ENCODE measurements at regions of chr5 and their contacts with region 1.

Region 1: GRCh38 chr5:10452768-10453331 is 11.2 kb downstream of the ROPN1L start:
- DNase-seq: peak; percentile 55 to 69
- H3K4me3 ChIP-seq: no peak overlapping the region
- H3K4me3 Mint-ChIP-seq: no peak overlapping the region
- H3K27ac Mint-ChIP-seq: no peak overlapping the region
- H3K4me1 ChIP-seq: peaks cover 11% of the 10 kb centered on the region
- H3K4me1 Mint-ChIP-seq: no peaks in the 10 kb centered on the region
- H3K27me3 ChIP-seq: no peaks in the 10 kb centered on the region
- H3K27me3 Mint-ChIP-seq: no peaks in the 10 kb centered on the region
- CTCF ChIP-seq: peak; percentile 67 to 79

Region 2: DNA sequence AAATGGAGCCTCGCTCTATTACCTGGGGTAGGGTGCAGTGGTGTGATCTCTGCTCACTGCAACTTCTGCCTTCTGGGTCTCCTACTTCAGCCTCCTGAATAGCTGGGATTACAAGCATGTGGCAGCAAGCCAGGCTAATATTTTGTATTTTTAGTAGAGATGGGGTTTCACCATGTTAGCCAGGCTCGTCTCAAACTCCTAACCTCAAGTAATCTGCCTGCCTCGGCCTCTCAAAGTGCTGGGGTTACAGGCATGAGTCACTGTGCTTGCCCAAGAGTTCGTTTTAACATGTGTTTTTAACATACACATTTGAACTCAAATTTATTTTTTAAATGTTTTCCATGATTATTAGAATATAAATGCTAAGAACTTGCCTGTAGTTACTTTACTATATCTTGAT is 65.2 kb before region 1 on chr5:
- CTCF ChIA-PET with region 1: no interaction called
- POLR2A ChIA-PET with region 1: no interaction called
- intact Hi-C with region 1: no loop called
- DNase-seq: no peak
- H3K4me3 ChIP-seq: no peak overlapping the region
- H3K4me3 Mint-ChIP-seq: no peak overlapping the region
- H3K27ac Mint-ChIP-seq: no peak overlapping the region
- H3K4me1 ChIP-seq: no peaks in the 10 kb centered on the region
- H3K4me1 Mint-ChIP-seq: no peaks in the 10 kb centered on the region
- H3K27me3 ChIP-seq: no peaks in the 10 kb centered on the region
- H3K27me3 Mint-ChIP-seq: no peaks in the 10 kb centered on the region
- CTCF ChIP-seq: no peak

Region 3: GRCh38 chr5:10563945-10564837 is 111.3 kb after region 1 on chr5 and contains the start of gene ANKRD33B:
- CTCF ChIA-PET with region 1: no interaction called
- POLR2A ChIA-PET with region 1: interaction called, 8 read pairs
- intact Hi-C with region 1: loop called (anchors 2 kb)
- DNase-seq: peak; percentile 82 to 86
- H3K4me3 ChIP-seq: peak within 1 kb of the TSS; percentile 77
- H3K4me3 Mint-ChIP-seq: peak within 1 kb of the TSS; percentile 90
- H3K27ac Mint-ChIP-seq: peak within 1 kb of the TSS; percentile 10
- H3K4me1 ChIP-seq: peaks cover 50% of the 10 kb centered on the region
- H3K4me1 Mint-ChIP-seq: peaks cover 27% of the 10 kb centered on the region
- H3K27me3 ChIP-seq: no peaks in the 10 kb centered on the region
- H3K27me3 Mint-ChIP-seq: no peaks in the 10 kb centered on the region
- CTCF ChIP-seq: no peak
- total RNA-seq, gene ANKRD33B: 22.8 and 25.3 TPM in 2 replicates

Region 4: DNA sequence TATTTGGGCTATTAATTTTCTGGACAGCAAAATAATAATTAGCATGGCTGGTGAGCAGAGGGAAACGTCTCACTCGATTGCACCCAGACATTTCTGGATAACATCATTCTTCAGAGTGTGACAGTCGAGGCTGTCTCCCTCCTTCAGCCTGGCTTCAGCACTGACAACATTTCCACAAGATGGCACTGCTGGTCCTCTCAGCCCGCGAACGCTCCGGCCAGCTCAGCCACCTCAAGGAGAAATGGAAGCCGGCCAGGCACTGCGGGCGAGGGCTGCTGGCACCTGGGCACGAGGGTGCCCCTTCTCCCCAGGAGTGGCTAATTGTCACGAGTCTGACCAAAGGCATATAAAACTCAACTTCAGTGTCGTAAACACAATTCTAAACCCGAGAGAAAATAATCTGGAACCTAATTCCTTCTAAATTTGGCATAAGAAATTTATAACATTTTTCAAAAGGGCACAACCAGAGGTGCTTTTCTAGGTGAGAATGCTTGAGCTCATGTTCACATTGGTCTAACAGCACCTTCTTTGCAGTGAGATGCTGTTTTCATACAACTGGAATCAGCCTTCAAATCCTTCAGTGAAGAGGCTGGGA is 242.3 kb after region 1 on chr5:
- CTCF ChIA-PET with region 1: interaction called, 4 read pairs
- POLR2A ChIA-PET with region 1: no interaction called
- intact Hi-C with region 1: loop called (anchors 1 kb)
- DNase-seq: peak; percentile 53 to 63
- H3K4me3 ChIP-seq: no peak overlapping the region
- H3K4me3 Mint-ChIP-seq: no peak overlapping the region
- H3K27ac Mint-ChIP-seq: no peak overlapping the region
- H3K4me1 ChIP-seq: peaks cover 16% of the 10 kb centered on the region; the same call in 1 of the 2 replicates
- H3K4me1 Mint-ChIP-seq: peaks cover 14% of the 10 kb centered on the region
- H3K27me3 ChIP-seq: no peaks in the 10 kb centered on the region
- H3K27me3 Mint-ChIP-seq: no peaks in the 10 kb centered on the region
- CTCF ChIP-seq: peak; percentile 62 to 67

Region 5: DNA sequence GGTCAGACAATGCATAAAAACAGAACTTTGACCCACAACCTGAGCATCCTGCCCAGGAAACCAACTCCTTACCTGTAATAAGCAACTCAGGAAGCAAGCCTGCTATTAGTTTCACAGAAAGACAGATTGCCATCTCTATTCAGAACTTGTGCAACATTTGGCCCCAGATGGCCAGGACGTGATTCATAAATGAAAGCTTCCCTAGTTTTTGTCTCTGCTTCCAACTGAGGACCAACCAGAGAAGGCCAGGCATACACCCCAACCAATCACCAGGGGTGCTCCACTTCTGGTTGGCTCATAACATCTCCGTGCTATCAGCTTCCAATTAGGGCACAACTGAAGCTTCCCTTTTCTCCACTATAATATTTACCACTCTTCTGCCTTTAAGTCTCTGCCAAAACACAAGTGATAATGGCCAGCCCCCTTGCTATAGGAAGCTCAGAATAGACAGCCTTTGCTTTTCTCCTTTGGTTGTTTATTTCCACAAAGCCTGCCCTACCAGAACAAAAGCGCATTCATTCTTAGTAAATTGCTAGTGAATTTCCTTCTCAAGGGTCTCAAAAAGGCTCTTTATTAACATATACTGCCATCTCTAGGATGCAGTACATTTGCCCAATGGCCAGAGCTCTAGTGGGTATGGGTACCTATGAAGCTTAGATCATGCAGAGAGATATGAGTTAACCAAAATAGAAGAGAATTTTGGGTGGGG is 597.9 kb after region 1 on chr5:
- CTCF ChIA-PET with region 1: no interaction called
- POLR2A ChIA-PET with region 1: no interaction called
- intact Hi-C with region 1: no loop called
- DNase-seq: no peak
- H3K4me3 ChIP-seq: no peak overlapping the region
- H3K4me3 Mint-ChIP-seq: no peak overlapping the region
- H3K27ac Mint-ChIP-seq: no peak overlapping the region
- H3K4me1 ChIP-seq: 0 out of 2 replicates have a peak, but pooled peaks cover 3% of the 10 kb centered on the region
- H3K4me1 Mint-ChIP-seq: peaks cover 6% of the 10 kb centered on the region
- H3K27me3 ChIP-seq: no peaks in the 10 kb centered on the region
- H3K27me3 Mint-ChIP-seq: peaks cover 2% of the 10 kb centered on the region
- CTCF ChIP-seq: no peak

Measured in Caco-2 (cell line).